ENCODE measurements at regions of chr17 and their contacts with region 1.

Region 1: DNA sequence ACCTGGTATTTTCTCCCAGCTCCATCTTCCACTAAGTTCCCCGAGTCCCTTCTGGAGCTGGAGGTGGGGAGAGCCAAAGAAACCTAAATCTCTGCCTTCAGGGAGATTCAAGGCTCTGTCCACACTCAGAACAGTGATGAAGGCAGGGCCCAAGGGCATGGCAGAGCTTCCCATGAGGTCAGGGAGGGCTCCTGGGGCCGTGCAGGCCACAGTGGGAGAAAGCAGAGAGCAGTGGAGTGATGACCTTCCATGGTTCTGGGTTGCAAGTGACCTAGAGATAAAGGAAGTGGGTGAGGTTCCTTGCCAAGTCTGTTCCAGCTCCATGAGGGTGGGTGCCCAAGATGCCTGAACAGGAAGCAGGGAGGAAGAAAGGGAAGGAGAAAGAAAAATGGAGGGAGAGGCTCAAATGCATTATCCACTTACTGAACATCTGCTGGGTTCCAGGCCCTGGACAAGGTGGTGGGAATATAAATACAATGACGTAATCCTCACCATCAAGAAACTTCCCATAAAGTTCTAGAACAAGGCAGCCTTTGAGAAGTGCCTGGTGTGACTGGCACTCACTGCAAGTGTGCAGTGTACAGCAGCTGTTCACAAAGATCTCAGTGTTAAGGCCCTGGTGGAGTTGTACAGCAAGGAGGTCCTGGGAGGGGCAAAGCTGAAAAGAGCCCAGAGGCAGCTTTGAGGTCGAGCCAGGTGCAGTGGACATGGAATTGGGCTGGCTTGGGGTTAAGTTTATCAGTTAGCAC is 13.3 kb downstream of the TBKBP1 start:
- DNase-seq: peak; percentile 5
- H3K4me3 Mint-ChIP-seq: no peak overlapping the region
- H3K27ac Mint-ChIP-seq: peak overlapping the region; percentile 98
- H3K4me1 Mint-ChIP-seq: peaks cover 69% of the 10 kb centered on the region
- H3K27me3 Mint-ChIP-seq: no peaks in the 10 kb centered on the region

Region 2: GRCh38 chr17:47733047-47733673 is 25.9 kb after region 1 on chr17 and contains the start of gene TBX21:
- CTCF ChIA-PET with region 1: interaction called, 158 read pairs
- intact Hi-C with region 1: loop called (anchors 1 kb)
- DNase-seq: peak; percentile 92
- H3K4me3 Mint-ChIP-seq: peak within 1 kb of the TSS; percentile 100
- H3K27ac Mint-ChIP-seq: peak within 1 kb of the TSS; percentile 99
- H3K4me1 Mint-ChIP-seq: peaks cover 70% of the 10 kb centered on the region
- H3K27me3 Mint-ChIP-seq: no peaks in the 10 kb centered on the region
- total RNA-seq, gene TBX21: 50.6 to 52.3 TPM

Measured in activated naive CD4-positive, alpha-beta T cell treated with anti-CD3 and anti-CD28 coated beads for 36 hours (primary cell).